ENCODE measurements at regions of chr14 and their contacts with region 1.

Region 1: GRCh38 chr14:90454041-90455000 is 57.5 kb downstream of the CALM1 start:
- DNase-seq: peak; percentile 95 to 100 (median 98)

Region 2: GRCh38 chr14:90409209-90409730 is 45.1 kb before region 1 on chr14:
- intact Hi-C with region 1: loop called (anchors 2 kb)
- DNase-seq: peak in 3 of 10 donors; percentile 48 to 92 (median 58)

Region 3: DNA sequence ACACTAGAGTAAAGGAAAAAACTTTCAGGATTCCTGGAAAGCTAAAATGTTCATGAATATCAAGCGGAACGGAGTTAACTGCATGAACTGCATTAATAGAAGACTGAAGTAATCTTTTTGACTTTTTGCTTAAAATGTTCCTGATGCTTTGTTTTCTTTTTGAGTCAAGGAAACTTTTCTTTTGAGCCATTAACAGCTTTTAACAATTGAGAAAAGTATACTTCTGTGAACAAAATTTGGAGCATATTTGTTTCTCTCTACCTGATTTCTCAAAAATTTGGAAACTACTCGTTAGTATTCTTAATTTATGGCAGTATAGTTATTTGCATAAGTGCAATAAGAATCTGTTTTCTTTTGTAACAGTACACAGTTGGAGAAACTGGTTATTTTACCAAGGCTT is 21.0 kb after region 1 on chr14:
- intact Hi-C with region 1: no loop called
- DNase-seq: no peak

Region 4: DNA sequence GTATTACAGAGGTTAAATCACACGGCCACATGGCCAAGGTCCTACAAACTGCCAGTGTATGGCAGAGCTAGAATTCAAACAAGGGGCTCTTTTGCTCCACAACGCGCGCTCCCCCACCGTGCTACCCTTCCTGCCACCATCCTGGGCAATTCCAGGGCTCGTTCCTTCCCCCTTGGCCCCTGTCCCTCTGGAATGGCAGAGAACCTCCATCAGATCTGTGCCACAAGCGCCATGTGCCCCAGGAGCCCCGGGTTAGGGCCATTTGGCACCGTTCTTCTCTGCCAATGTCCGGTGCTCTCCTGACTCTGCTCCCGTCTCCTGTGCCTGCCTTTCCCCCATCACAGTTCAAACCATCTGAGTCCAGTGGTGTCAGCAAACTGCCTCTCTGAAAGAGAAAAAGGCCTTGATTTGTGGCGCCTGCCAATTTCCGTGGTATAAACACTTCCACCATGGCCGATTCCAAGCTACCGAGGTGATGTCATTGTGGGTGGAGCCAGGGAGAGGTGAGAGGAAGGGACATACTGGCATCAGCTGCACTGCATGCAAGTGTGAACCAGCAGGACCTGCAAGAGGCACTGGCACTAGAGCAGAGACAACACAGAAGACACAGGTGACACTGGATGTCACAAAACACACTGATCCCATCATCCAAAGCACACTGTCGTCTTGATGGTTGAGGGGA is 105.6 kb after region 1 on chr14:
- intact Hi-C with region 1: loop called (anchors 5 kb)
- DNase-seq: peak in 3 of 10 donors; percentile 52 to 72 (median 72)

Region 5: DNA sequence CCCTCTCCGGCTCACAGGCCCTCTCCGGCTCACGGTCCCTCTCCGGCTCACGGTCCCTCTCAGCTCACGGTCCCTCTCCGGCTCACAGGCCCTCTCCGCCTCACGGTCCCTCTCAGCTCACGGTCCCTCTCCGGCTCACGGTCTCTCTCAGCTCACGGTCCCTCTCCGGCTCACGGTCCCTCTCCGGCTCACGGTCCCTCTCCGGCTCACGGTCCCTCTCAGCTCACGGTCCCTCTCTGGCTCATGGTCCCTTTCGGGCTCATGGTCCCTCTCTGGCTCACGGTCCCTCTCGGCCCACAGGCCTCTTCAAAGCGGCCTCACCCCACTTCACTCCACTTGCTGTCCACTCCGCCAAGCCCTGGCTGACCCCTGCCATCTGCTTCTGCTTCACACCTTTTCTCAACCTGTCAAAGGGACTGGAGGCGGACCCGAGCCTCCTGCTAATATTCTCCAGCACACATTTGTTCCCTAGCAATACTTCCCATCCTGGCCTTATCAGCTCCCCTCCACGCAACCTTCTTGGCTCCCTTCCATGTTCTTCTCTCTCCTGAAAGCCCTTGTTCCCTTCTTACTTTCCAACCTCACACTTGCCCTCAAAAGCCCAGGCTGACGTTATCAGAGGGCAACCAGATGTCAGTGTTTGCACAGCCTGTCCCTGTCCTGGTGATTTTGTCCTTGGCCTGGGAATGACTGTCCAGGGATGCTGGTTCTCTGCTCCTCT is 119.2 kb after region 1 on chr14:
- intact Hi-C with region 1: no loop called
- DNase-seq: peak in 1 of 10 donors; percentile 75

Measured in posterior cingulate gyrus (tissue), 11 donors.